ENCODE measurements at regions of chr6 and their contacts with region 1.

Region 1: DNA sequence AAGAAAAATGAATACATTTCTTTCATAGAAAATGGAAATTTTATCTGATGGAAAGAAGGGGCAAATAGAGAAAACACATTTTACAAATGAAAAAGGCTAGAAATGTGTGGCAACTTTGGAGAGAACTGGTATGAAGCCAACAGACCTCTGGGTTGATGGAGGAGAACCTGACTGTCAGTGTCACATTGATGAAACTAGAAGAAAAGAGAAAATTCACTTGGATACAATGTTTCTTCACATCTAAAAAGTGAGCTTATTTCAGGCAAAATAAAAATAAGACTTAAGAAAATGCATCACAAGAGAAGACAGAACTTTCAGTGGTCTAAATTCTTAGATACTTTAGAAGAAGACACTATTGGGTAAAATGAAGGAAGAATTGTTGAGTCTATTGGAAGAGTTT is at the start of gene OR12D2:
- DNase-seq: no peak
- H3K4me3 ChIP-seq: no peak within 1 kb of the TSS
- H3K27ac ChIP-seq: no peak within 1 kb of the TSS
- H3K4me1 ChIP-seq: no peaks in the 10 kb centered on the region
- H3K27me3 ChIP-seq: no peaks in the 10 kb centered on the region
- CTCF ChIP-seq: no peak
- EP300 ChIP-seq: no peak
- POLR2A ChIP-seq: no peak
- total RNA-seq, gene OR12D2: not detected

Region 2: GRCh38 chr6:29336269-29336668 is 59.1 kb before region 1 on chr6:
- in situ Hi-C with region 1: no loop called
- intact Hi-C with region 1: loop called (anchors 2 kb)
- DNase-seq: no peak
- H3K4me3 ChIP-seq: no peak overlapping the region
- H3K27ac ChIP-seq: no peak overlapping the region
- H3K4me1 ChIP-seq: no peaks in the 10 kb centered on the region
- H3K27me3 ChIP-seq: no peaks in the 10 kb centered on the region
- CTCF ChIP-seq: no peak
- EP300 ChIP-seq: no peak
- POLR2A ChIP-seq: no peak